Aorta (tissue), 5 donors: ENCODE measurements at regions of chr6 and their contacts with region 1.

Region 1: DNA sequence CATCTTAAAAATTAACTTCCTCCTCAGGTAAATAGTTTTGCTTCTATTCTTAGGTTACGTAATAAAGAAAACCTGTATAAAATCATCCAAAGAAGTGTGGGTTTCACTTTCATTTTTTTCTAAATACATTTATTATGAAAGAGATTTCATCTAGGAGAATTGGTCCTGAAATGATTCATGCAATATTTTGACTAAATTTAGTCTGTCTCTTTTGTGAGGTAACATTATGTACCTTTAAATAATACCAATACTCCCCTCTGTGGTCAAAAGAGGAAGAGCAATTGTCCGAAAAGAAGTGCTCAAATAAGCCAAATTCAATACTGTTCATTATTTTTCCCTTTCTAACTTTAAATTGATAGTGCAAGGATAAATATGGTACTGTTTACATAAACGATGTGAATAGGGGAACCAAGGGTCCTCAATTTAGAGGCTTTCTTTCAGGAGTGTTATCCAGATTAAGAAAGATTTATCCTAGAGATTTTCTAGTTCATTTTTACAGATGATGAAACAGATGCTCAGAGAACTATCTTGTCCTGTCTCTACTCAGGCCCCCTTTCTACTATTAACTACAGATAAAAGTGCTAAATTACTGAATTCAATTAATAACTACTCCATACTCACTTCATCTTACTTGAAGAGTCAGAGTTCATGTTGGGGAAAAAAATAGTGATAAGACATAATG is 26.2 kb downstream of the CYP39A1 start:
- DNase-seq: no peak
- ATAC-seq: peak; percentile 76
- H3K4me3 ChIP-seq: no peak overlapping the region
- H3K27ac ChIP-seq: no peak overlapping the region
- H3K4me1 ChIP-seq: no peaks in the 10 kb centered on the region
- H3K27me3 ChIP-seq: no peaks in the 10 kb centered on the region

Region 2: DNA sequence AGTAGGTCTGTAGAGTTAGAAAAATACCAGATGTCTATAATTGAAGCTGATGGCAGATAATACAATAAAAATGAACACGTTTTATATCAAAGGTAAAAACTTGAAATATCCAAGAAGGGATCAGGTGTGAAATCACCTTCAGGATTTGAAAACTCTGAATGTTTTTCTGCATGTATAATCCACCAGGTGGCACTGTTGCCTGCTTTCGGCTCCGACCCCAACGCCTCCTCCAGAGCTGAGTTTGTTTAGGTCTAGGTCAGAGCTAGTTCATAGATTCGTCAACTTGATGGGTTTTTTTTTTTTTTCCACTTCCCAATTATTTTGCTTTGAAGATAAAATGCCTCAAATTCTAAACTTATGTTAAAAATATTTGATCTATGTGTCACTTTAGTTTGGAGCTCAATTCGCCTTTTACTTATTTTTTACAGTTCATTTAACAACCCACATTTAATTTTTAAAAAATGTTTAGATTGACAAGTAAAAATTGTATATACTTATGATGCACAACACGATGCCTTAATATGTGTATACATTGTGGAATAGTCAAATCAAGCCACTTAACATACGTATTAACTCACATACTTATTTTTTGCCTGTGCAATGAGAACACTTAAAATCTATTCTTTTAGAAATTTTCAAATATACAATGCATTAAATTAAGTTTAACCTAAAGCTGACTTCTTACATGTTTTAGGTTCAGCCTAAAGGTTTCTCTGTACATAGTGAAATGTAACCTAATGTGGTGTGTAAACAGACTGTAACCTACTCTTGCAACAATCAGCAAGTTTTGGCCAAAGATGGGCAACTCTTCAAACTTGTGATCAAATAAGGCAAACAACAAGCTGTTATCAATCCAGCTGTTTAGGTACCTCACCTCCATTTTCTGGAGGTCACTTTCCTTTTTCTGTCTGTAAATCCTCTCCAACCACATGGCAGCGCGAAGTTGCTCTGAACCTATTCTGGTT is 536.0 kb before region 1 on chr6:
- intact Hi-C with region 1: loop called (anchors 5 to 10 kb)
- DNase-seq: peak; percentile 55 to 80
- ATAC-seq: peak; percentile 74
- H3K4me3 ChIP-seq: no peak overlapping the region
- H3K27ac ChIP-seq: no peak overlapping the region
- H3K4me1 ChIP-seq: no peaks in the 10 kb centered on the region
- H3K27me3 ChIP-seq: no peaks in the 10 kb centered on the region

Region 3: DNA sequence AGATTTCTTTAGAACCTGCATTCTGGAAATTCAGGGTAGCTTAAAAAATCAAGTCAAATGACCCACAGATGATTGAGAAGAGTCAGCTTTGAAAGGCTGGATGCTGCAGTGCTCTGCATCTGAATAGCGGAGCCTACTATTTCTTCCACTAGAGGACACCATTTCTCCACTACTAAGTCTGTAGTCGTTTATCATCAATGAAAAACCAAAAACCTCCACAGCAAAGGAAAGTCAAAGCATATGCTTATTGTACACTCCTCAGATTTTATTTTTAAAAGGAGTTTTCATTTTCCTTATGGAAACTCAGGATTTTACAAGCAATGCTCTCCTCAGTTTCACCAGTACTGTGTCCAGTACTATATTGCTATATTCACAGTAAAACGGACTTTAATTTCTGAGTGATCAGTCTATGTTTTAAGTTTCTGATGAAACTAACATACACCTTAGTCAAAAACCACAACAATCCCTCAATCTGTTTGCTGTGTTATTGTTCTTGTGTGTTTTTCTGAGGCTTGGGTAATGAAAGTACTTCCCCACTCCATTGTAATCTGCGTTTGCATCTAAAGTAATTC is 405.1 kb before region 1 on chr6:
- intact Hi-C with region 1: loop called (anchors 5 to 10 kb)
- DNase-seq: no peak
- ATAC-seq: peak; percentile 70
- H3K4me3 ChIP-seq: no peak overlapping the region
- H3K27ac ChIP-seq: no peak overlapping the region
- H3K4me1 ChIP-seq: peaks cover 3 to 7% of the 10 kb centered on the region in 2 donors
- H3K27me3 ChIP-seq: no peaks in the 10 kb centered on the region

Region 4: DNA sequence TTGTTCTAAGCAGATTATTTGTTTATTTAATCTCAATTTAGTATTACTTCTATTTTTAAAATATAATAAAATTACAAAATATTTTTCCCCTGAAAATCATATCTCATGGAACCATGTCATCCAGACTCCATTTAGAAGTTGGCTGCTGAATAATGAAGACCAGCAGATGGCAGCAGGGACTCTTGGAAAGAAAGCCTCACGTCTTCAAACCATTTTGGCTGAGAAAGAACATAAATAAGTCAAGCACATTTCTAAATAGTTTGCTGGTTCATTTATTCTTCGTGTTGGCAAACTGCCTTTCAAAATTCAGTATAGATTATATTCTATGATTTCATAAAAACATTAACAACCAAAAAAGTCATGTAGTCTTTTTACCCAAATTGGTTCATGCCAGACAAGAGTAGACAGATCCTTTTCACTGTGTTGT is 206.8 kb before region 1 on chr6:
- intact Hi-C with region 1: loop called (anchors 1 kb)
- DNase-seq: peak in 1 of 2 donors; percentile 58
- ATAC-seq: peak; percentile 78
- H3K4me3 ChIP-seq: no peak overlapping the region
- H3K27ac ChIP-seq: no peak overlapping the region
- H3K4me1 ChIP-seq: peaks cover 7 to 9% of the 10 kb centered on the region in 2 donors
- H3K27me3 ChIP-seq: no peaks in the 10 kb centered on the region

Region 5: GRCh38 chr6:46491628-46492547 is 134.5 kb before region 1 on chr6:
- intact Hi-C with region 1: loop called (anchors 5 kb)
- DNase-seq: peak; percentile 70 to 86
- ATAC-seq: peak; percentile 93
- H3K4me3 ChIP-seq: peak overlapping the region; percentile 74 to 82
- H3K27ac ChIP-seq: peak overlapping the region; percentile 63 to 73
- H3K4me1 ChIP-seq: peaks cover 0 to 4% of the 10 kb centered on the region in 2 donors
- H3K27me3 ChIP-seq: no peaks in the 10 kb centered on the region

Region 6: GRCh38 chr6:46521464-46521971 is 104.9 kb before region 1 on chr6:
- intact Hi-C with region 1: loop called in 1 of 2 experiments (anchors 10 kb)
- DNase-seq: no peak
- ATAC-seq: peak; percentile 84
- H3K4me3 ChIP-seq: no peak overlapping the region
- H3K27ac ChIP-seq: peak overlapping the region in 1 of 2 donors; percentile 93
- H3K4me1 ChIP-seq: peaks cover 0 to 11% of the 10 kb centered on the region in 2 donors
- H3K27me3 ChIP-seq: no peaks in the 10 kb centered on the region

Region 7: DNA sequence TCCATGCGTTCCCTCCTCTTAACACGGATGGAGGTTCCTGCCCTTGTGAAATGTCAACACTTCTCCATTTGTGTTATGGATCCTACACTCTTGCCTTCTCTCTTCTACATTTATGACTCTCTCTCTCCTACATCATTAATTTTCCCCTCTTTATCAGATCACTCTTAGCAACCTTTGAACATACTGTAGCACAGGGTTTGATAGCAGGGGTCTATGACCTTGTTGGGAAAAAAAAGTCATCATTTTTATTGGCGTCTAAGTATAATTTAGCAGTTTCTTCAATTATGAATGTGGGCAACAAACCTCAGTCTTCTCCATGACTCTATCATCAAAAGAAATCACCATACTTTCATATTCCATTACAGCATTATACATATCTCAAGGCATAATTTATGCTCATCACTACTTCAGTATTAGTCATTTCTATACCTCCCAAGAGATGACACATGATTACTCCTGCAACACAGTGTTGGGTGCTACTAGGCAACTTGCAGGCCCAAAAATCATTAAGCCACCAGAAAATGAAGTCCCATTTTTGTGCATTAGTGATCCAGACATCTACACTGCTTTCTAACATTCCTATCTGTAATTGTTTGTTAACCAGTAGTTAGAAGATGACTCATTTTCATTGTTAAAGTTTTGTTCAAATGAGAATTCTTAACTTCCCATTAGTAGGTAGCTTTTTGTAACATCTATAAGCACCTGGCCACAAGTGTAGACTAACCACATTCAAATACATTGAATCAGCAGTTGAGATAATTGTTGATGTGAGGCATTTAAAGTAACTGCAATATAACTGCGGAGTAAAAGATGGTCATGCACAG is 16.8 kb after region 1 on chr6:
- intact Hi-C with region 1: no loop called
- DNase-seq: no peak
- ATAC-seq: no peak
- H3K4me3 ChIP-seq: no peak overlapping the region
- H3K27ac ChIP-seq: no peak overlapping the region
- H3K4me1 ChIP-seq: no peaks in the 10 kb centered on the region
- H3K27me3 ChIP-seq: no peaks in the 10 kb centered on the region